CD4-positive, alpha-beta T cell (primary cell): ENCODE measurements at regions of chr12 and their contacts with region 1.

Region 1: GRCh38 chr12:123365025-123365917 is 624 bp upstream of the SBNO1 start:
- DNase-seq: peak; percentile 95 to 100 (median 97)
- ATAC-seq: peak; percentile 75
- H3K4me3 ChIP-seq: peak overlapping the region; percentile 93
- H3K4me3 Mint-ChIP-seq: peak overlapping the region; percentile 89
- H3K27ac ChIP-seq: peak overlapping the region; percentile 93 to 96
- H3K27ac Mint-ChIP-seq: peak overlapping the region; percentile 88
- H3K4me1 ChIP-seq: peaks cover 47% of the 10 kb centered on the region
- H3K4me1 Mint-ChIP-seq: peaks cover 24% of the 10 kb centered on the region
- H3K27me3 ChIP-seq: no peaks in the 10 kb centered on the region
- H3K27me3 Mint-ChIP-seq: no peaks in the 10 kb centered on the region
- CTCF ChIP-seq: peak; percentile 85

Region 2: DNA sequence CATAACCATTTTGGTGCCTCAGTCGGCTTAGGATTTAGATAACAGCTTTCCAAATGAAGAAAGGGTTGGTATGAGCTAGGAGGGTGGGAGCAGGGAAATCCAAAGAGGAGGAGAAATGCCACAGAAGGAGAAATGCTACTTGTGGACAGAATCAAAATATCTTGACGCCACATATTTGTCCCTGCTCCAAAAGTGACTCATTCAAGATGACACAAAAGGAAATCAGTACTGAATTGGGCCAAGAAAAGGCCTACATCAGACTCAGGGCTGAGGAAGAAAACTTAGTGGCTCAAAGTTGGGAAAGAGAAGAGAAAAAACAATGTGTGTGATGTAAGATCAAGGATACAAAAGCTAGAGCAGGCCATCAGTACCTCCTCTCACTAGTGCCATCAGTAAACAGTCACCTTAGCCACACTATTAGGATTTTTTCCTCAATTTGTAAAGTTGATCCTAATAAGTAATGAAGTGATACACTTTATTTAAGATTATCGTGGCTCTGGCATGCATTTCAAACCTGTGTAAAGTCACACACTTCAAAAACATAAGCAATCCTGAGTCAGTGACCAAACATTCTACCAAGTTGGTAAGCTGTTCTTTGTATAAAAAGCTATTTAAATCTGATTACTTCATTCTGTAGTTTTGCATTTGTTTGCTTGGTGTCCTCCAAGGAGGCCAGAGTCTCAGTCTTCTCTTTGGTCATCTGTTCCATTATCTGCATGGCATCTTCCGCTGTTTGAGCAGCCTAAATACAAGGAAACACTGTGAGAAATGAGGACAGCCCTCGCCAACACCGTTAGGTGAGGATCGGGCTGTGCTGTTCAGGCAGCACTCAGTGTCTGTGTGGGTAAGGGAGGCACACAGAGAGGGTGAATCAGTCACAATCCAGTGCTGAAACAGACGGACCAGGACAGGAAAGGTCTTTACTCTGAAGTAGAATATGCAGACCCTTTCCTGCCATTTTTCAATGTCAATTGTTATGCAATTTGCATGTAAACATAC is 1046.4 kb before region 1 on chr12:
- CTCF ChIA-PET with region 1: no interaction called
- POLR2A ChIA-PET with region 1: no interaction called
- intact Hi-C with region 1: no loop called
- DNase-seq: no peak
- ATAC-seq: no peak
- H3K4me3 ChIP-seq: no peak overlapping the region
- H3K4me3 Mint-ChIP-seq: no peak overlapping the region
- H3K27ac ChIP-seq: no peak overlapping the region
- H3K27ac Mint-ChIP-seq: no peak overlapping the region
- H3K4me1 ChIP-seq: no peaks in the 10 kb centered on the region
- H3K4me1 Mint-ChIP-seq: no peaks in the 10 kb centered on the region
- H3K27me3 ChIP-seq: no peaks in the 10 kb centered on the region
- H3K27me3 Mint-ChIP-seq: no peaks in the 10 kb centered on the region
- CTCF ChIP-seq: no peak

Region 3: GRCh38 chr12:122965851-122966722 is 399.2 kb before region 1 on chr12 and contains the start of gene ABCB9:
- CTCF ChIA-PET with region 1: no interaction called
- POLR2A ChIA-PET with region 1: interaction called, 3 read pairs
- intact Hi-C with region 1: loop called in 1 of 2 experiments (anchors 5 kb)
- DNase-seq: peak; percentile 91 to 99 (median 95)
- ATAC-seq: peak; percentile 97
- H3K4me3 ChIP-seq: peak within 1 kb of the TSS; percentile 78
- H3K4me3 Mint-ChIP-seq: peak within 1 kb of the TSS; percentile 81
- H3K27ac ChIP-seq: peak within 1 kb of the TSS; percentile 31 to 44
- H3K27ac Mint-ChIP-seq: peak within 1 kb of the TSS; percentile 14
- H3K4me1 ChIP-seq: peaks cover 28% of the 10 kb centered on the region
- H3K4me1 Mint-ChIP-seq: peaks cover 5% of the 10 kb centered on the region
- H3K27me3 ChIP-seq: no peaks in the 10 kb centered on the region
- H3K27me3 Mint-ChIP-seq: no peaks in the 10 kb centered on the region
- CTCF ChIP-seq: no peak
- total RNA-seq, gene ABCB9: 5.4 to 6.2 TPM

Region 4: GRCh38 chr12:123271001-123271729 is 94.1 kb before region 1 on chr12:
- CTCF ChIA-PET with region 1: interaction called, 9 read pairs
- POLR2A ChIA-PET with region 1: interaction called, 7 read pairs
- intact Hi-C with region 1: loop called in 1 of 2 experiments (anchors 1 kb)
- DNase-seq: peak; percentile 60 to 87 (median 72)
- ATAC-seq: peak; percentile 88
- H3K4me3 ChIP-seq: peak overlapping the region; percentile 41
- H3K4me3 Mint-ChIP-seq: no peak overlapping the region
- H3K27ac ChIP-seq: no peak overlapping the region
- H3K27ac Mint-ChIP-seq: no peak overlapping the region
- H3K4me1 ChIP-seq: peaks cover 38% of the 10 kb centered on the region
- H3K4me1 Mint-ChIP-seq: peaks cover 32% of the 10 kb centered on the region
- H3K27me3 ChIP-seq: no peaks in the 10 kb centered on the region
- H3K27me3 Mint-ChIP-seq: no peaks in the 10 kb centered on the region
- CTCF ChIP-seq: peak; percentile 10

Region 5: GRCh38 chr12:123354600-123354999 is 10.7 kb before region 1 on chr12:
- CTCF ChIA-PET with region 1: interaction called, 12 read pairs
- POLR2A ChIA-PET with region 1: interaction called, 13 read pairs
- intact Hi-C with region 1: no loop called
- DNase-seq: no peak
- ATAC-seq: no peak
- H3K4me3 ChIP-seq: no peak overlapping the region
- H3K4me3 Mint-ChIP-seq: no peak overlapping the region
- H3K27ac ChIP-seq: no peak overlapping the region
- H3K27ac Mint-ChIP-seq: no peak overlapping the region
- H3K4me1 ChIP-seq: peaks cover 21% of the 10 kb centered on the region
- H3K4me1 Mint-ChIP-seq: peaks cover 65% of the 10 kb centered on the region
- H3K27me3 ChIP-seq: no peaks in the 10 kb centered on the region
- H3K27me3 Mint-ChIP-seq: no peaks in the 10 kb centered on the region
- CTCF ChIP-seq: no peak

Region 6: GRCh38 chr12:123445388-123446351 is 80.4 kb after region 1 on chr12:
- CTCF ChIA-PET with region 1: interaction called, 3 read pairs
- POLR2A ChIA-PET with region 1: interaction called, 12 read pairs
- intact Hi-C with region 1: no loop called
- DNase-seq: no peak
- ATAC-seq: no peak
- H3K4me3 ChIP-seq: no peak overlapping the region
- H3K4me3 Mint-ChIP-seq: peak overlapping the region; percentile 8
- H3K27ac ChIP-seq: peak overlapping the region in 1 of 2 donors; percentile 40
- H3K27ac Mint-ChIP-seq: peak overlapping the region; percentile 45
- H3K4me1 ChIP-seq: peaks cover 41% of the 10 kb centered on the region
- H3K4me1 Mint-ChIP-seq: peaks cover 34% of the 10 kb centered on the region
- H3K27me3 ChIP-seq: no peaks in the 10 kb centered on the region
- H3K27me3 Mint-ChIP-seq: no peaks in the 10 kb centered on the region
- CTCF ChIP-seq: no peak

Region 7: DNA sequence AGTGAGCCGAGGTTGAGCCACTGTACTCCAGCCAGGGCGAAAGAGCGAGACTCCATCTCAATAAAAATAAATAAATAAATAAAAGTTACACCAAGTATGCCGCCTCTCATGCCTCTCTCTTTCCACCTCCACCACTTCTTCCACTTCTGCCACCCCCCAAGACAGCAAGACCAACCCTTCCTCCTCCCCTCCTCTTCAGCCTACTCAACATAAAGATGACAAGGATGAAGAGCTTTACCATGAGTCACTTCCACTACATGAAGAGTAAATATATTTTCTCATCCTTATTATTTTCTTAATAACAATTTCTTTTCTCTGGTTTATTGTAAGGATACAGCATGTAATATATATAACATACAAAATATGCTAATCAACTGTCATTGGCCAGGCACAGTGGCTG is 215.5 kb after region 1 on chr12:
- CTCF ChIA-PET with region 1: interaction called, 4 read pairs
- POLR2A ChIA-PET with region 1: interaction called, 6 read pairs
- intact Hi-C with region 1: loop called in 1 of 2 experiments (anchors 1 kb)
- DNase-seq: no peak
- ATAC-seq: no peak
- H3K4me3 ChIP-seq: no peak overlapping the region
- H3K4me3 Mint-ChIP-seq: peak overlapping the region; percentile 20
- H3K27ac ChIP-seq: no peak overlapping the region
- H3K27ac Mint-ChIP-seq: no peak overlapping the region
- H3K4me1 ChIP-seq: peaks cover 28% of the 10 kb centered on the region
- H3K4me1 Mint-ChIP-seq: peaks cover 26% of the 10 kb centered on the region
- H3K27me3 ChIP-seq: no peaks in the 10 kb centered on the region
- H3K27me3 Mint-ChIP-seq: no peaks in the 10 kb centered on the region
- CTCF ChIP-seq: no peak

Region 8: GRCh38 chr12:123713398-123713797 is 348.1 kb after region 1 on chr12:
- CTCF ChIA-PET with region 1: interaction called, 3 read pairs
- POLR2A ChIA-PET with region 1: interaction called, 5 read pairs
- intact Hi-C with region 1: loop called in 1 of 2 experiments (anchors 10 kb)
- DNase-seq: peak in 1 of 14 experiments; percentile 17
- ATAC-seq: no peak
- H3K4me3 ChIP-seq: peak overlapping the region; percentile 87
- H3K4me3 Mint-ChIP-seq: peak overlapping the region; percentile 85
- H3K27ac ChIP-seq: no peak overlapping the region
- H3K27ac Mint-ChIP-seq: peak overlapping the region; percentile 62
- H3K4me1 ChIP-seq: peaks cover 27% of the 10 kb centered on the region
- H3K4me1 Mint-ChIP-seq: peaks cover 38% of the 10 kb centered on the region
- H3K27me3 ChIP-seq: no peaks in the 10 kb centered on the region
- H3K27me3 Mint-ChIP-seq: no peaks in the 10 kb centered on the region
- CTCF ChIP-seq: no peak